ENCODE measurements at regions of chr21 and their contacts with region 1.

Region 1: DNA sequence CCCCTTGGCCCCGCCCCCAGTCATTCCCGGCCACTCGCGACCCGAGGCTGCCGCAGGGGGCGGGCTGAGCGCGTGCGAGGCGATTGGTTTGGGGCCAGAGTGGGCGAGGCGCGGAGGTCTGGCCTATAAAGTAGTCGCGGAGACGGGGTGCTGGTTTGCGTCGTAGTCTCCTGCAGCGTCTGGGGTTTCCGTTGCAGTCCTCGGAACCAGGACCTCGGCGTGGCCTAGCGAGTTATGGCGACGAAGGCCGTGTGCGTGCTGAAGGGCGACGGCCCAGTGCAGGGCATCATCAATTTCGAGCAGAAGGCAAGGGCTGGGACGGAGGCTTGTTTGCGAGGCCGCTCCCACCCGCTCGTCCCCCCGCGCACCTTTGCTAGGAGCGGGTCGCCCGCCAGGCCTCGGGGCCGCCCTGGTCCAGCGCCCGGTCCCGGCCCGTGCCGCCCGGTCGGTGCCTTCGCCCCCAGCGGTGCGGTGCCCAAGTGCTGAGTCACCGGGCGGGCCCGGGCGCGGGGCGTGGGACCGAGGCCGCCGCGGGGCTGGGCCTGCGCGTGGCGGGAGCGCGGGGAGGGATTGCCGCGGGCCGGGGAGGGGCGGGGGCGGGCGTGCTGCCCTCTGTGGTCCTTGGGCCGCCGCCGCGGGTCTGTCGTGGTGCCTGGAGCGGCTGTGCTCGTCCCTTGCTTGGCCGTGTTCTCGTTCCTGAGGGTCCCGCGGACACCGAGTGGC is at the start of gene SOD1:
- DNase-seq: peak; percentile 97
- H3K4me3 ChIP-seq: peak within 1 kb of the TSS; percentile 66 to 94
- H3K27ac ChIP-seq: peak within 1 kb of the TSS; percentile 61 to 92
- H3K4me1 ChIP-seq: peaks cover 3% of the 10 kb centered on the region
- H3K27me3 ChIP-seq: no peaks in the 10 kb centered on the region
- CTCF ChIP-seq: peak in 2 of 3 experiments; percentile 5 to 20
- POLR2A ChIP-seq: no peak
- total RNA-seq, gene SOD1: 135 to 170 TPM

Region 2: DNA sequence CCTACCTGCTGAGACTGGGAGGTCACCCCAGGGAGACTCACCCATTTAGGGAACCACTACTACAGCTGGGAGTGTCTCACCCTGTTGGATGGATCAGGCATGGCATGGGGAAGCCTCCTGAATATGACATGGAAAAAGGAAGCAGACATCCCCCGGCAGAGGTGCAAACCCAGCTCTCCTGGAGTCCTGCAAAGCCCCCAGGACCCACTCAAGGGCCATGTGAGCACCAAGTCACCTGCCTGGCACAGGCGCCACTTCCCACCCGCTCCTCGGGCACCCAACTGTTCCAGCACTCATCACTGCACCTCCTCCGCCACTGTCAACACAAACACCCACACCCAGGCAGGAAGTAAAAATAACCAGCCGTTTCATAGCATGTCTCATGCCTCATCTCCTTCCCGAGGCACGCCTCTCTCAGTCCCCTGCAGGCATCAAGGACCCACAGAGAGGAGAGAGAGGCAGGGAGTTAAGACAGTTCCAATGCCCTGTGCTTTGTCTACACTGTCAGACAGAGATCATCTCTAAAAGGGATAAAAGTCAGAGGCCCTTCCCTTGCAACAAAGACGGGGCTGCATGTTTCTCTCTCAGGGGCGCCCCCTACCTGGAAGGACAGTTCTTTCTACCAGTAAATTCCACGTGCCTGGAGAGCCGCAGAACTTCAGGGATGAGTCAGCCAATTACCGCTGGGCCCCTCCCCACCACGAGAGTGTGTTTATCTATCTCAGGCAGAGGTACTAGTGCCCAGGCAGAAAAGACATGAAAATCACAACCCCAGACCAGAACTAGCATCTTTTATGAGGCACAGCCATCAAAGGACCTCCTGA is 150.3 kb before region 1 on chr21:
- intact Hi-C with region 1: no loop called
- DNase-seq: no peak
- H3K4me3 ChIP-seq: no peak overlapping the region
- H3K27ac ChIP-seq: no peak overlapping the region
- H3K4me1 ChIP-seq: peaks cover 2% of the 10 kb centered on the region
- H3K27me3 ChIP-seq: no peaks in the 10 kb centered on the region
- CTCF ChIP-seq: no peak
- POLR2A ChIP-seq: no peak

Region 3: DNA sequence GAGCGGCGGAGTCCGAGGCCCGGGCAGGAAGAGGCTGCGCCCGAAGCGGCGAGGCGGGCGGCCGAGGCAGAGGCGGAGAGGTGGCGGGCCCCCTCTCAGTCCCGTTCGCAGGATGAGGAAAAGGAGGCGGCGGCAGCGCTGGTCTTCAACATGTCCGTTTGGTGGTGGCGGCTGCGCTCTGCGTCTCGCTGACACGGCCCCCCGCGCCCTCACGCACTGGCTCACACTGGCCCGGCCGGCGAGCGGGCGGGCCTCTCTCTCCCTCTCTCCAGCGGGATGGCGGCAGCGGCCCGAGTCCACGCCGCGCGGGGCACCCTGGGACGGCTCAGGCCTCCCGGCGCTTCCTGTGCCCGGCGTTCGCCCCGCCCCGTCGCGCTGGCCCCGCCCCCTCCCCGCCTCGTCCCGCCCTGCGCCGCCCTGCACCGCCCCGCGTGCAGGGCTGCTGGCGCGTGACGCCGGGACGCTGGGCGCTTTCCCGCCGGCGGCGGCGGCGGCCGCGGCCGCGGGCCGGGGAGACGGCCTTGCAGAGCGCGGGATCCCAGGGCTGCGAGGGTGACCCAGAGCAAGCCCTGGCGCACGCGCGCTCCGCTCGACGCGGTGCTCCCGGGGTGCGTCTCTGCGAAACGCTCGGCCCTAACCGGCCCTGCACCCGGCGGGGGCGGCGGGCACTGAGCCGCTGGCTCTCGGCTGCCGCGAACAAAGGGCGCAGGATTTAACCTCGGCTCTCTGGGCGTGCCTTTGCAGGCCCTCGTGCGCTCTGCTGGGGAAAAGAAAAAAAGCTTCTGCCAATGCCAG is 72.3 kb after region 1 on chr21 and contains the start of gene SCAF4:
- intact Hi-C with region 1: loop called (anchors 10 kb)
- DNase-seq: peak; percentile 92
- H3K4me3 ChIP-seq: peak within 1 kb of the TSS; percentile 95 to 98
- H3K27ac ChIP-seq: peak within 1 kb of the TSS; percentile 93 to 97
- H3K4me1 ChIP-seq: peaks cover 24% of the 10 kb centered on the region
- H3K27me3 ChIP-seq: no peaks in the 10 kb centered on the region
- CTCF ChIP-seq: no peak
- POLR2A ChIP-seq: peak; percentile 41
- total RNA-seq, gene SCAF4: 44.0 to 50.2 TPM

Region 4: DNA sequence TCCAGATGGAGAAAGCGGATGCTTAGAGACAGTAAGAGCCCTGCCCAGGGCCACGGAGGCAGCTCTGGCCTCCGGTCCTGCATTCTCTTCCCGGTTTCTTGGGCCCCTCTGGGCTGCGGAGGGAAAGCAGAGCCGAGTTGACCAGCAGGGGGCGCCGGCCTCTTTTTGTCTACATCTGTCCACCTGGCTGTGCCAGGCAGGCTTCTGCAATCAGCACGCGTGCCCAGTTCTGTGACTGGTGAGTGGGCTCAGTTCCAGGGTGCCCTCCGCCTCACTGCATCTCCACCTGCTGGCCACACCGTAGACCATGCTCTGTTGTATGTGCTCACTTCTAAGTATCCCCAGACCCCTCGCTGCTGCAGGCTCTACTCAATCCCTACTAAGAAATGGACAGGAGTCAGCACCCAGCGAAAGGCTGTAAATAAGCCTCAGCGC is 206.4 kb after region 1 on chr21:
- intact Hi-C with region 1: no loop called
- DNase-seq: peak; percentile 95
- H3K4me3 ChIP-seq: no peak overlapping the region
- H3K27ac ChIP-seq: no peak overlapping the region
- H3K4me1 ChIP-seq: no peaks in the 10 kb centered on the region
- H3K27me3 ChIP-seq: no peaks in the 10 kb centered on the region
- CTCF ChIP-seq: peak; percentile 74 to 94 (median 87)
- POLR2A ChIP-seq: no peak